A549 (cell line): ENCODE measurements at regions of chr14 and their contacts with region 1.

Region 1: DNA sequence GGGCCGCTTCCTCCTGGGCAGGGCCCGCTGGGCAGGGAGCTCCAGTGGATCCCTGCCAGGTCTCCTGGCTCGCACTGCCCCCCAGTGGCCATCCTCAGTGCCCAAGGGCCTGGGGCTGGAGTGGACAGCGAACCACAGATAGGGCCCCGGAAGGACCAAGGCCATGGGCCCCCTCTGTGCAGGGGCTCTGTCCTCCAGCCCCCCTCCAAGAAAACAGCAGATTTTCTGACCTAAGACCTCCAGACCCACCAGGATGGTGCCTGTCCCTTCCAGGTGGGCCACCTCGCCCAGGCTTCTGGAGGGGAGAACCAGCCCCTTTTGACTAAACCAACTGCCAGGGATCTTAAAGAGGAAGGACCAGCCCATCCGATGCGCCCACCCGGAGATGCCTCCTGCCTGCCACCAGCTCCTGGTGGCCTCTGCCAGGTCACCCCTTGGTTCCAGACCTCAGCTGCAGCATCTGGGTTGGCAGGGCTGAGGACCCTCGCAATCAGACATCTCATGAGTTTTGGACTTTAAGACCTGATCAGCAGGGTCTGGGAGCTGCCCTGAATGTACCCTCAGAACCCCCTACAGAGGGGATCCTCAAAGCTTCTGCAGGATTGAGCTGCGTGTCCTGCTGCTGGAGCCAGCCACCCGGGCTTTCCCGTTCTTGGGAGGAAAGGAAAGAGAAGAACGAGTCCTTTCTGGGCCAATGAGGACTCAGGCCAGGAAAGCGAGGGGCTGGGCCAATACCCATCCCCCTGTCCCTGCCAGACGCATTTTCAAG is 325.8 kb upstream of the DIO3 start:
- DNase-seq: peak; percentile 70 to 78
- ATAC-seq: peak; percentile 90 to 98
- H3K4me3 ChIP-seq: no peak overlapping the region
- H3K27ac ChIP-seq: peak overlapping the region; percentile 69 to 85
- H3K4me1 ChIP-seq: peaks cover 11% of the 10 kb centered on the region; the same call in 2 of the 3 replicates
- CTCF ChIP-seq: peak; percentile 89
- EP300 ChIP-seq: no peak
- POLR2A ChIP-seq: no peak
- RAD21 ChIP-seq: peak; percentile 93 to 97

Region 2: DNA sequence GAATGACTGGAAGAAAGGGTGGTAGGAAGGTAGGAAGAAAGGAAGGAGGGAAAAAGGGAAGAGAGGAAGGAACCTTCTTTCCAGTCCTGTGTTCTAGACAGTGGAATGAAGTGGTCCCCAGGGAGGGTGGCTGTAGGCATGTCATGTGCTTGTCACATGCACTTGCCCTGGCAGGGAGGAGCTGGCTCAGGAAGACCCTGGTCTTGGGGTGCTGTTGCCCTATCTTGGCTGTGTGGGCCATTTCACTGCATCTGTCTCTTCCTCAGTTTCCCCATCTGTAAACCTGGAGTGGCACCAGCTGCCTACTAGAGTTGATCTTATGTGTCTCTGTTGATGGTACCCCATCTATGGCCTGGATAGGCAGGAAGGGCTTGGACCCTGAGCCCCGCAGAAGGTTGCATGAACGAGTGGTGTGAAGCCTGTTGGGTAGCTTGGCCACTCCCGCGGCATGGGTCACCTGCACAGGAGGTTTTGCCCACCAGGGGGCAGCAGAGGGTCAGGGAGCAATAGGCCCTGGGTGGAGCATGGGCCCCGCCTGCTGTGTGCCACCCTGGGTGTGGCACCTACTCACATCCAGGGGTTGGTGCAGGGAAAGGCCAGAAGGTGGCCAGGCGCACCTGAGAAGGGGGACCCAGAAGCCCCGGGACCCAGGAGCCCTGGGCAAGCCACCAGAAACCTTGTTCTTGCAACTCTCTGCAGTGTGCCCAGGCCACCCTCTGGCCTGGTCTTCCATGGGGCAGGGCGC is 384.5 kb before region 1 on chr14:
- CTCF ChIA-PET with region 1: interaction called, 30 read pairs
- POLR2A ChIA-PET with region 1: no interaction called
- DNase-seq: peak; percentile 69 to 71
- ATAC-seq: peak; percentile 86 to 98
- H3K4me3 ChIP-seq: no peak overlapping the region
- H3K27ac ChIP-seq: peak overlapping the region in 1 of 2 experiments; percentile 65; a peak in 3 of 6 replicates
- H3K4me1 ChIP-seq: peaks cover 7% of the 10 kb centered on the region; the same call in 1 of the 3 replicates
- CTCF ChIP-seq: peak; percentile 79
- EP300 ChIP-seq: no peak
- POLR2A ChIP-seq: no peak
- RAD21 ChIP-seq: peak; percentile 90 to 91

Region 3: DNA sequence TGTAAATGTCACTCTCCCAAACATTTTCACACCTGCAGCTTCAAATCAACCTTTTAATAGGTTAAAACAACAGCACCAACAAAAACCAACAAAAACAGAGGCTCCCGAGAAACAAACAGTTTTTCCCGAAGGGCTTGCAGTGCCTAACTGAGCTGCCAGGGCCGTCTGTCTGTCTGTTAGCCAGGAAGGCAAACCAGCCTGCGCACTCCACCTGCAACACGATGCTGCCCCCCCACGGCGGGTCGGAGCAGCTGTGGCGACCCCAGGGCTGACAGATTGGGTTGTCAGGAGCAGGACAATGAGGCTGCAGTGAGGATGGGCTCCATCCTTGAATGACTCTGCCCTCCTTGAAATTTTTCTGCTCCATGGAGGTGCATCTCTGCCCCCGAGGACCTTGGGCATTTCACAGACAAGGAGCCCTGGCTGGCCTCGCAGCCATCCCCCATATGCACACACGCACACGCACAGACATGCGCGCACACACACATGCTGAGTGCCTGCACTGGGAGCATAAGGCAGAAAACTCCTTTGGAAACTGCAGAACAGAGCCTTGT is 334.6 kb before region 1 on chr14:
- CTCF ChIA-PET with region 1: interaction called, 32 read pairs
- POLR2A ChIA-PET with region 1: interaction called, 3 read pairs
- DNase-seq: peak; percentile 35 to 54
- ATAC-seq: peak; percentile 54 to 77; a peak in 3 of 6 replicates
- H3K4me3 ChIP-seq: no peak overlapping the region
- H3K27ac ChIP-seq: 0 out of 6 replicates have a peak overlapping the region, but pooled peaks of 1 of the 2 experiments have one; percentile 44
- H3K4me1 ChIP-seq: peaks cover 5% of the 10 kb centered on the region; the same call in 2 of the 3 replicates
- CTCF ChIP-seq: peak; percentile 54
- EP300 ChIP-seq: no peak
- POLR2A ChIP-seq: no peak
- RAD21 ChIP-seq: peak; percentile 77 to 78

Region 4: GRCh38 chr14:101072945-101073597 is 162.4 kb before region 1 on chr14:
- CTCF ChIA-PET with region 1: interaction called, 12 read pairs
- POLR2A ChIA-PET with region 1: no interaction called
- DNase-seq: peak; percentile 97
- ATAC-seq: peak; percentile 97 to 98
- H3K4me3 ChIP-seq: no peak overlapping the region
- H3K27ac ChIP-seq: peak overlapping the region; percentile 92
- H3K4me1 ChIP-seq: peaks cover 37% of the 10 kb centered on the region
- CTCF ChIP-seq: peak; percentile 19; the same call in 1 of the 3 replicates
- EP300 ChIP-seq: peak; percentile 85 to 89; a peak in 3 of 5 replicates
- POLR2A ChIP-seq: no peak
- RAD21 ChIP-seq: peak; percentile 49 to 67

Region 5: GRCh38 chr14:101219896-101220703 is 15.4 kb before region 1 on chr14:
- CTCF ChIA-PET with region 1: interaction called, 14 read pairs
- POLR2A ChIA-PET with region 1: no interaction called
- DNase-seq: no peak
- ATAC-seq: peak in 1 of 2 experiments; percentile 35; a peak in 1 of 6 replicates
- H3K4me3 ChIP-seq: no peak overlapping the region
- H3K27ac ChIP-seq: 0 out of 6 replicates have a peak overlapping the region, but pooled peaks of 1 of the 2 experiments have one; percentile 19
- H3K4me1 ChIP-seq: no peaks in the 10 kb centered on the region
- CTCF ChIP-seq: no peak
- EP300 ChIP-seq: no peak
- POLR2A ChIP-seq: no peak
- RAD21 ChIP-seq: no peak